K562 (cell line): ENCODE measurements at regions of chr9 and their contacts with region 1.

Region 1: DNA sequence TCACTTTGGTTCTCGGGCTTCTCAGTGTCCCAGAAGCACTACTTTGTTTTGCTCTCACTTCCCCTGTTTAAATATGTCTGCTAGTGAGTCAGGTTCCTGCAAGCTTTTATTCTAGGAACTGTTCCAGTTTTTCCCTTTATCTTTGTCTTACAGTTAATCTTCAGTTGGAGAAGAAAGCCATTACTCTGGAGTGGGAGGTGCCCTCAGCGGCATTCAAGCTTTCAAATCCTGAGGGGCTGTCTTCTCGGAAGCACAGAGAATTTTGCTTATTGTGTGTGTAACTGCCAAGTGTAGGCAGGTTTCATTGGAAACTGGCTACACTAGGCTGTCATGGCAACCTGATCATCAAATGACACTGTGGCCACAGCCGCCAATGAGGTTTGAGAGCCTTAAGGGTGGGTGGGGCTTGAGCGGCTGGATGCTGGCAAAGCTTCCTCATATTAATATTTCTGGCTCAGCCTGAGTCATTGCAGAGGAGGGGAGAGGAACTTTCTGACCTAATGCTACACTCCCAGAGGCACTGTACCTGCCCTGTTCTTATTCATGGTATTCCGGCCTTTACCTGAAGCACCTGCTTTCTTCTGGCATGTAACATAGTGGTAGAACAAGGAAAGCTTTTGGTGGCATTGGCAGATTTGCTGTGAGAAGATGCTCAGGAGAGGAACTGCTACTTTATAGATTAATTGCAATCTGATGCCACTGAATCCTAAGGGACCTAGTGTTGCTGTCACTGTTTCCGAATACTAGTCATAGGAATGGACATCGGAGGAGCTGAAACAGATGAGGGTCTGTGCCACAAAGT is 26.3 kb downstream of the SLC25A25 start:
- DNase-seq: peak; percentile 86 to 97 (median 90)
- ATAC-seq: peak; percentile 90
- H3K4me3 ChIP-seq: peak overlapping the region; percentile 12; the same call in 1 of the 2 replicates
- H3K27ac ChIP-seq: peak overlapping the region; percentile 89
- H3K4me1 ChIP-seq: peaks cover 77 to 84% of the 10 kb centered on the region in 2 experiments
- H3K27me3 ChIP-seq: no peaks in the 10 kb centered on the region
- CTCF ChIP-seq: no peak
- EP300 ChIP-seq: peak; percentile 92
- POLR2A ChIP-seq: peak; percentile 59
- RAD21 ChIP-seq: peak in 1 of 2 experiments; percentile 12; a peak in 3 of 4 replicates

Region 2: GRCh38 chr9:128067876-128068613 is 26.3 kb before region 1 on chr9 and contains the start of gene SLC25A25:
- CTCF ChIA-PET with region 1: no interaction called
- POLR2A ChIA-PET with region 1: interaction called, 23 read pairs
- in situ Hi-C with region 1: no loop called
- intact Hi-C with region 1: loop called (anchors 1 kb)
- DNase-seq: peak; percentile 96 to 99 (median 98)
- ATAC-seq: peak; percentile 83
- H3K4me3 ChIP-seq: peak within 1 kb of the TSS; percentile 89
- H3K27ac ChIP-seq: peak within 1 kb of the TSS; percentile 95
- H3K4me1 ChIP-seq: peaks cover 33 to 45% of the 10 kb centered on the region in 2 experiments
- H3K27me3 ChIP-seq: no peaks in the 10 kb centered on the region
- CTCF ChIP-seq: no peak
- EP300 ChIP-seq: 0 out of 2 replicates have a peak, but pooled peaks have one; percentile 8
- POLR2A ChIP-seq: no peak
- RAD21 ChIP-seq: no peak
- polyA plus RNA-seq, gene SLC25A25: 0.07 to 0.10 TPM

Region 3: DNA sequence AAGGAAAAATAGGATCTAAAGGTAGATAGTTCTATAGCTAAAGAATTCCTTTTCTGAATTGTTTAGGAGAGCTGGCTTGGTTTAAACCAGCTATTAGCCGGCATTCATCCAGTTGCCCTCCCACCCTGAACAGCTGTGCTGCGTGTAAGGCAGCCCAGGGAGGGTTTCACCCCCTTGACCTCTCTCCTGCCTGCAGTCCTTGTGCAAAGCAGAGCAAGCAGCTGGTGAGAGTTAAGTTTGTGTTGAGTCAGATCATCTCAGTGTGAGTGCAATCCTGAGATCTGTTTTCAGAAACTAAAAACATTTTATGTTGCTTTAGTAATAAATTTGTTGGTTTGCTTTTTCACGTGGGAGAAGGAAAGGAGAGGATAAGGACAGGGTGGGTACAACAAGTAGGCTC is 13.3 kb before region 1 on chr9:
- CTCF ChIA-PET with region 1: interaction called, 3 read pairs
- POLR2A ChIA-PET with region 1: interaction called, 82 read pairs
- in situ Hi-C with region 1: no loop called
- intact Hi-C with region 1: loop called (anchors 2 kb)
- DNase-seq: peak; percentile 56 to 87 (median 67)
- ATAC-seq: peak; percentile 60
- H3K4me3 ChIP-seq: no peak overlapping the region
- H3K27ac ChIP-seq: peak overlapping the region; percentile 99
- H3K4me1 ChIP-seq: peaks cover 58 to 61% of the 10 kb centered on the region in 2 experiments
- H3K27me3 ChIP-seq: no peaks in the 10 kb centered on the region
- CTCF ChIP-seq: no peak
- EP300 ChIP-seq: peak; percentile 16; the same call in 1 of the 2 replicates
- POLR2A ChIP-seq: no peak
- RAD21 ChIP-seq: no peak

Region 4: DNA sequence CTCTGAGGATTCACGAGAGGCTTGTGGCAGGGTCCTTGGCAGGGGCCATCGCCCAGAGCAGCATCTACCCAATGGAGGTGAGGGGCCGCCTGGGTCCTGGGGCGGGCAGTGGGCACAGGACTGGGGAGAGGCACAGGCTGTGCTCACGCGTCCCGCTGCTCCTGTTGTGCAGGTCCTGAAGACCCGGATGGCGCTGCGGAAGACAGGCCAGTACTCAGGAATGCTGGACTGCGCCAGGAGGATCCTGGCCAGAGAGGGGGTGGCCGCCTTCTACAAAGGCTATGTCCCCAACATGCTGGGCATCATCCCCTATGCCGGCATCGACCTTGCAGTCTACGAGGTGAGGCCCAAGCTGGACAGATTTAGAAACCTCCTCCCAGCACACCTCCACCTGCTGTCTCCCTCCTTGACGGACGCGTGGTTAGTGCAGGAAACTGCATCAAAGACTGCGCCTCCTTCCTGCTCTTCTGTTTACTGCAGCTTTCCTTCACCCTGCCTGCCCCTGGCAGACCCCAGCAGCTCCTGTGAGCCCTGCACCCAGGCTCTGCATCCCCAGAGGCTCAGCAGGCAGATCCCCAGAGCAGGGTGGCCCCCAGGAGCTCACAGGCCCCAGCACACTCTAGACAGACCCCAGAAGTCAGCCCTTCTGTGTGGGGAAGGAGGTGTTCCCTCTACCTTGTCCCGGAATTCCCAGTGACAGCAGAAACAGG is 12.0 kb after region 1 on chr9:
- CTCF ChIA-PET with region 1: no interaction called
- POLR2A ChIA-PET with region 1: interaction called, 13 read pairs
- in situ Hi-C with region 1: no loop called
- intact Hi-C with region 1: no loop called
- DNase-seq: no peak
- ATAC-seq: no peak
- H3K4me3 ChIP-seq: no peak overlapping the region
- H3K27ac ChIP-seq: no peak overlapping the region
- H3K4me1 ChIP-seq: peaks cover 11 to 57% of the 10 kb centered on the region in 2 experiments; a peak in 4 of 5 replicates
- H3K27me3 ChIP-seq: no peaks in the 10 kb centered on the region
- CTCF ChIP-seq: 0 out of 6 replicates have a peak, but pooled peaks of 1 of the 3 experiments have one; percentile 13
- EP300 ChIP-seq: no peak
- POLR2A ChIP-seq: no peak
- RAD21 ChIP-seq: no peak

Region 5: DNA sequence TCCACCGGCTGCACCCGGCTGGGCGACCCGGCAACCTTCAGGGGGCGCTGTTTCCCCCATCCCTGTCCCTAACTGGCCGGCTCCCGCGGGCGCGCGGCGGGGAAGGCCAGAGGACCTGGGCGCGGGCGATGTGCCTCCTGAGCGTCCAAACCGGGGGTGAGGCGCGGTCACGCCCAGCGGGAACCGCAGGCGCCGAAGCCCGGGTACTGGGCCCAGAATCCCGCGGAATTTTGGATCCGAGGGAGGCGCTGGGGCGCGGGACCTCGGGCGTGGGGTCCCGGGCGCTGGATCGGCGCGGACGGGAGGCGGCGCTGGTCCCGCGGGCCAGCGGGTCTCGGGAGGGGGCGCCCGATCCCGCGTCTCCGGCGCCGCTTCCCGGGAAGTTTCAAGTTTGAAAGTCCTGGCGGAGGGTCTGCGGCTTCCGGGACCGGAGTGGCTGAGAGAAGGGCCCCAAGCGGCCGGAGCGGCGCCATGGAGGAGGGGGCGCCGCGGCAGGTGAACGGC is 608.1 kb after region 1 on chr9 and contains the start of gene PKN3:
- CTCF ChIA-PET with region 1: no interaction called
- POLR2A ChIA-PET with region 1: no interaction called
- in situ Hi-C with region 1: no loop called
- intact Hi-C with region 1: no loop called
- DNase-seq: peak; percentile 90 to 97 (median 92)
- ATAC-seq: peak; percentile 91
- H3K4me3 ChIP-seq: peak within 1 kb of the TSS; percentile 69
- H3K27ac ChIP-seq: peak within 1 kb of the TSS; percentile 71
- H3K4me1 ChIP-seq: peaks cover 9 to 43% of the 10 kb centered on the region in 2 experiments
- H3K27me3 ChIP-seq: no peaks in the 10 kb centered on the region
- CTCF ChIP-seq: peak; percentile 73 to 96 (median 89)
- EP300 ChIP-seq: no peak; the same call in 1 of the 2 replicates
- POLR2A ChIP-seq: peak; percentile 75
- RAD21 ChIP-seq: peak; percentile 57 to 58
- polyA plus RNA-seq, gene PKN3: 0.82 to 1.4 TPM